CD8-positive, alpha-beta memory T cell (primary cell): ENCODE measurements at regions of chr7 and their contacts with region 1.

Region 1: GRCh38 chr7:43314379-43315189 is 202.1 kb downstream of the HECW1 start:
- DNase-seq: no peak
- H3K4me3 ChIP-seq: no peak overlapping the region
- H3K4me3 Mint-ChIP-seq: peak overlapping the region in 5 of 7 donors; percentile 1 to 58 (median 5)
- H3K27ac ChIP-seq: no peak overlapping the region
- H3K27ac Mint-ChIP-seq: peak overlapping the region in 3 of 8 donors; percentile 12 to 44 (median 22)
- H3K4me1 ChIP-seq: peaks cover 5% of the 10 kb centered on the region
- H3K4me1 Mint-ChIP-seq: peaks cover 16 to 18% (median 17%) of the 10 kb centered on the region in 3 donors
- H3K27me3 ChIP-seq: no peaks in the 10 kb centered on the region
- H3K27me3 Mint-ChIP-seq: no peaks in the 10 kb centered on the region

Region 2: DNA sequence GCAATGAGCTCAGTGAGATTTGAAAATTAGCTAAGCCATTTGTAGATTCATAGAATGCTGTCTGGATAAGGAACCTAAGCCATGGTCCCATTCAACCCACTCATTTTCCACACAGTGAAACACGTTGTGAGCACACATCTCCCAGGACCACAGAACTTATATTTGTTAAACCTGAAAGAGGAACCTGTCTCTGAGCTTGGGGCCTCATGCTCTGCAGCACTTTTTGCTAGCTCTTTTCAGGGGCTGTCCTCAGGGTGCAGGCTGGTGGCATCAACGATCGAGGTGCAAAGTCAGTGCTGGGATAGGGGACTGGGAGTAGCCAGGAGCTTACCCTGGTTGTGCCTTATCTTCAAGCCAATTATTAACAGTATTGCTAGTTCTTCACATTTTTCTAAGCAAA is 190.2 kb before region 1 on chr7:
- CTCF ChIA-PET with region 1: no interaction called
- POLR2A ChIA-PET with region 1: no interaction called
- DNase-seq: no peak
- H3K4me3 ChIP-seq: no peak overlapping the region
- H3K4me3 Mint-ChIP-seq: no peak overlapping the region
- H3K27ac ChIP-seq: no peak overlapping the region
- H3K27ac Mint-ChIP-seq: no peak overlapping the region
- H3K4me1 ChIP-seq: no peaks in the 10 kb centered on the region
- H3K4me1 Mint-ChIP-seq: no peaks in the 10 kb centered on the region
- H3K27me3 ChIP-seq: peaks cover 5% of the 10 kb centered on the region
- H3K27me3 Mint-ChIP-seq: peaks cover 3 to 19% of the 10 kb centered on the region in 2 donors

Region 3: GRCh38 chr7:43639858-43640491 is 325.4 kb after region 1 on chr7:
- CTCF ChIA-PET with region 1: no interaction called
- POLR2A ChIA-PET with region 1: interaction called, 10 read pairs
- DNase-seq: no peak
- H3K4me3 ChIP-seq: no peak overlapping the region
- H3K4me3 Mint-ChIP-seq: peak overlapping the region in 3 of 7 donors; percentile 10 to 47 (median 41)
- H3K27ac ChIP-seq: no peak overlapping the region
- H3K27ac Mint-ChIP-seq: peak overlapping the region; percentile 62 to 93 (median 86)
- H3K4me1 ChIP-seq: peaks cover 93% of the 10 kb centered on the region
- H3K4me1 Mint-ChIP-seq: peaks cover 91 to 99% (median 93%) of the 10 kb centered on the region in 3 donors
- H3K27me3 ChIP-seq: no peaks in the 10 kb centered on the region
- H3K27me3 Mint-ChIP-seq: no peaks in the 10 kb centered on the region